ENCODE measurements at regions of chr7 and their contacts with region 1.

Region 1: DNA sequence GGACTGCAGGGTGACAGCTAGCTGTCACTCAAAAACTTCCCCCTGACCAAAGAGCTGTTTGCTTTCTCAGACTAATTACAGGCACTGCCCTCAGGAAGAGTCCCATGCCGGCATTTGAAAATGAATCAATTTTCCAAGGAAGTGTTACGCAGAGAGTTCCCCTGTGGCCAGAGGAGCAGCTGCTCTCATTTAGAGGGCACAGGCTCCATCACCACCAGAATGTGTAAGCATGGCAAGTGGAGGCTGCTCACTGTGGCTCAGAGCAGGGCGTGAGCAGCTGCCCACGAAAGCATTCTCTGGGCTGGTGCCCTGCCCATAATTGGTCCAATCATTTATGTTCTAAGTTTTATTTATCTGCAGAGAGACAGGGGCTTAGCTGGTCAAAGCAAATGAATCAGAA is 202.2 kb downstream of the RAMP3 start:
- DNase-seq: no peak
- ATAC-seq: no peak
- H3K4me3 ChIP-seq: no peak overlapping the region
- H3K27ac ChIP-seq: no peak overlapping the region
- H3K4me1 ChIP-seq: no peaks in the 10 kb centered on the region
- H3K27me3 ChIP-seq: no peaks in the 10 kb centered on the region
- CTCF ChIP-seq: no peak
- POLR2A ChIP-seq: no peak

Region 2: DNA sequence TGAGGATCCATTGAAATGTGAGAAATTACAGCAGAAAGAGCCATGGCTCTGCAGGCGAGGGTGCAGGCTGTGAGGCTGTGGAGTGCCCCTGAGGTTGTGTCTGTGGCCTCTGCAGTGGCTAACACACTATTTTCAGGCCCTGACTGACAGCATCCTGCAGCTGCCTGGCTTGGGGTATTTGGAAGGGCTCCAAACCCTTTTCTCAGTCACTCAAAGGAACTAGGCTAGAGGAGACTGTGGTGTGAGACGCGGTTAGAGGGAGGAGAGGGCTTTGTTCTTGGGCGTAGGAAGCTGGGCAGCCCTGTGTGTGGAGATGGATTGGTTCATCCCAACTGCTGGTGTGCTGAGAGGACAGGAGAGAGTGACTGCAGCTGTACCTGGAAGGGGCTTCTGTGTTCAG is 67.3 kb before region 1 on chr7:
- intact Hi-C with region 1: loop called in 1 of 10 experiments (anchors 10 kb)
- DNase-seq: peak in 4 of 5 donors; percentile 30 to 41 (median 40)
- ATAC-seq: peak; percentile 50 to 77 (median 72)
- H3K4me3 ChIP-seq: no peak overlapping the region
- H3K27ac ChIP-seq: peak overlapping the region in 5 of 12 donors; percentile 22 to 70 (median 61)
- H3K4me1 ChIP-seq: peaks cover 0 to 35% (median 11%) of the 10 kb centered on the region in 12 donors
- H3K27me3 ChIP-seq: no peaks in the 10 kb centered on the region
- CTCF ChIP-seq: no peak
- POLR2A ChIP-seq: no peak

Region 3: GRCh38 chr7:45416846-45417245 is 57.1 kb after region 1 on chr7:
- intact Hi-C with region 1: no loop called
- DNase-seq: no peak
- ATAC-seq: no peak
- H3K4me3 ChIP-seq: no peak overlapping the region
- H3K27ac ChIP-seq: no peak overlapping the region
- H3K4me1 ChIP-seq: no peaks in the 10 kb centered on the region
- H3K27me3 ChIP-seq: peaks cover 0 to 9% (median 0%) of the 10 kb centered on the region in 9 donors
- CTCF ChIP-seq: no peak
- POLR2A ChIP-seq: no peak